CD8-positive, alpha-beta memory T cell (primary cell): ENCODE measurements at regions of chr2 and their contacts with region 1.

Region 1: DNA sequence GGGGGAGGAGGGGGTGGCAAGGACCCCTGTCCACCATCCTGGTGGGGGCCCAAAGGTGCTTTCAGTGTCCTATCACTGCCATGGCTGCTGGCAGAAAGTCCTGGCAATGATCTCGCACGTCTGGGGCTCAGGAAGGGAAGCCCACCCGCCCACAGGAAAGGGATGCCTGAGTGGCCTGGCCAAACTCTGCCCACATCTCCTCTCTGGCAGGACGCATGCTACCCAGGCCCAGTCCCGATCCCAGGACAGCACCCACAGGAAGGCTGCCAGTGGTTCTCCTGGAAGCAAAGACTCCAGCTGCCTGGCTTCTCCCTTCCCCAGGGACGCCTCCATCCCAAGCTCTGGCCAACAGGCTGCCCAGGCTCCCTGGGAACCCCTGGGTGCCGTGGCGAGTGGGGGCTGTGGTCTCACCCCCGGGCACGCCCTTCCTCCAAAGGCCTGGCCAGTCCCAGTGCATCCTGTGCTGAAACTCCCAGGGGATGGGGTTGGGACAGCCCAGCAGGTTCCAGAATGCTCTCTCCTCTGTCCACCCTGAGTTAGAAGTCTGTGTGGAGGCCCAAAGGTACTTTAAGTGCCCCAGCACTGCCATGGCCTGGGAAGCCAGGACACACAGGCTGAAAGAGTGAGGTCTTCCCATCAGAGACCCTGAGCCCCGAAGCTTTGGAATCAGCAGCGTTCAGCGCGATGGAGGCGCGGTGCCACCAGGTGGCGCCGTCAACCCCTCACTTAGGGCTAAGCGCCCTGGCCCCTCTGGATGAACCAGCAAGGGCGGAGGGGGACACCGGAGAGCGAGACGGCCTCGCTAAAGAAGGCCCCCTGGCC is 29.8 kb upstream of the TAF1B start:
- DNase-seq: peak; percentile 51 to 71 (median 57)
- H3K4me3 ChIP-seq: no peak overlapping the region
- H3K4me3 Mint-ChIP-seq: no peak overlapping the region
- H3K27ac ChIP-seq: no peak overlapping the region
- H3K27ac Mint-ChIP-seq: peak overlapping the region in 3 of 8 donors; percentile 78 to 86 (median 81)
- H3K4me1 ChIP-seq: peaks cover 7% of the 10 kb centered on the region
- H3K4me1 Mint-ChIP-seq: peaks cover 4 to 10% (median 10%) of the 10 kb centered on the region in 3 donors
- H3K27me3 ChIP-seq: no peaks in the 10 kb centered on the region
- H3K27me3 Mint-ChIP-seq: peaks cover 4 to 9% of the 10 kb centered on the region in 2 donors

Region 2: DNA sequence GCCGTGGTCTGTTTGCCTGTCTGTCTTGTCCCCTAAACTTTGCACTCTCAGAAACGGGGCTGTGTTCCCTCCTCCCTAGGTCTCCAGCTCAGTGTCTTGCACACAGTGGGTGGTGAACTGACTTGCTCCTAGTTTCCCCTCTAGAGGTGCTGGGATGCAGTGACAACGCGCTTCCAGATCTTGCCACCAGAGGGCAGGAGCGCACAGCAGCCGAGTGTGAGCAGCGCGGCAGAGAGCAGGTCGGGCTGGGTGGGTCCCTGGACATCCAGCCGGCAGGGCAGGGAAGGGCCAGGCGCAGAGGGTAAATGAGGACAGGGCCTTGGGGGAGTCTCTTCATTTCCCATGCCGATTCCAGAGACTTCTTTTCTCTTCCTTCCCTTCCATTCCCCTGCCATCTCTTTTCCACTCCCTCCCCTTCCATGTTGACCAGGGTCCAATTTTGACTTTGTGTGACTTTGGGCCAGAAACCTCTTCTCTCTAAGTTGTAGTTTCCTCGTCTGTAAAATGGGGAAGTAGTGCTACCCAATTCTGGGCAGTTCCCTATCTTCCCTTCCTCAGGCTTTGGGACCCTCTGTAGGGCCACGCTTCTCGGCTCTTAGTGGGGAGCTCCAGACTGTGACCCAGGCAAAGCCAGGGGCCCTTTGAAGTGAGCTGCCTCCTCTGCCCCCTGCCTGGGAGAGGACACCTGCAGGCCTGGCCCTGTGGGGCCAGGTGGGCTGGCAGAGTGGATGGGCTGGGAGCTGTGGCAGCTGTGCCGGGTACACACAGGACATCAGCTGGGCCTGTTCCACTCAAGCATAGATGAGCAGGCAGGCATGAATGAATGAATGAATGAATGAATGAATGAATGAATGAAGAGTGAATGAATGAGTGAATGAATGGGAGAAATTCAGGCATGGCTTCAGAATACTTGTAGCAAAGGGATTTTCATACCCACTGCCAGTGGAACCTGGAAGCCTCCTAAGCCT is 13.6 kb before region 1 on chr2:
- CTCF ChIA-PET with region 1: interaction called, 30 read pairs
- POLR2A ChIA-PET with region 1: no interaction called
- DNase-seq: peak; percentile 66 to 86 (median 80)
- H3K4me3 ChIP-seq: peak overlapping the region; percentile 28
- H3K4me3 Mint-ChIP-seq: peak overlapping the region; percentile 73 to 87 (median 82)
- H3K27ac ChIP-seq: no peak overlapping the region
- H3K27ac Mint-ChIP-seq: peak overlapping the region; percentile 73 to 98 (median 94)
- H3K4me1 ChIP-seq: peaks cover 20% of the 10 kb centered on the region
- H3K4me1 Mint-ChIP-seq: peaks cover 30 to 35% (median 32%) of the 10 kb centered on the region in 3 donors
- H3K27me3 ChIP-seq: no peaks in the 10 kb centered on the region
- H3K27me3 Mint-ChIP-seq: peaks cover 0 to 1% of the 10 kb centered on the region in 2 donors

Region 3: GRCh38 chr2:9843229-9844035 is 29.9 kb after region 1 on chr2 and contains the start of gene TAF1B:
- CTCF ChIA-PET with region 1: interaction called, 16 read pairs
- POLR2A ChIA-PET with region 1: interaction called, 4 read pairs
- DNase-seq: peak; percentile 78 to 89 (median 85)
- H3K4me3 ChIP-seq: peak within 1 kb of the TSS; percentile 89
- H3K4me3 Mint-ChIP-seq: peak within 1 kb of the TSS; percentile 93 to 98 (median 95)
- H3K27ac ChIP-seq: peak within 1 kb of the TSS; percentile 38
- H3K27ac Mint-ChIP-seq: peak within 1 kb of the TSS; percentile 64 to 99 (median 89)
- H3K4me1 ChIP-seq: peaks cover 11% of the 10 kb centered on the region
- H3K4me1 Mint-ChIP-seq: peaks cover 45 to 54% (median 51%) of the 10 kb centered on the region in 3 donors
- H3K27me3 ChIP-seq: no peaks in the 10 kb centered on the region
- H3K27me3 Mint-ChIP-seq: peaks cover 0 to 4% of the 10 kb centered on the region in 2 donors
- total RNA-seq, gene TAF1B: 20.6 to 24.3 TPM

Region 4: DNA sequence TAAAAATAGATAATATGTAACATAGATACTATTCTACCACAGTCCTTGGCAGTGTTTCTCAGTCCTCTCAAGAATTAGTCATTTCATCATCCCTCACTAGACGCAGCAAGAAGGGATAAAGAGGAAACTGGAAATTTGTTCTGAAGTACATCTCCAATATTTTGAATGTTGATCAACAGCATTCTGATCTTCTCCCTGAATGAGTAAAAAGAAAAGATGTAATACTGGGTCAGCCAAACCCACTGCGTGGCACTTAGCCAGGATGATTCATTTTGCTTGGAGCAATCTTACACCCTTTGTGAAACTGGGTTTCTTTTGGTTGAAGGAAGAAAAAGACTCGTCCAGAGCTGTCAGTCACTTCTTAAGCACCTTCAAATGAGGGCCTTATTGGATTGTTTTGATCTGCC is 83.8 kb after region 1 on chr2:
- CTCF ChIA-PET with region 1: no interaction called
- POLR2A ChIA-PET with region 1: no interaction called
- DNase-seq: no peak
- H3K4me3 ChIP-seq: no peak overlapping the region
- H3K4me3 Mint-ChIP-seq: no peak overlapping the region
- H3K27ac ChIP-seq: no peak overlapping the region
- H3K27ac Mint-ChIP-seq: peak overlapping the region in 2 of 8 donors; percentile 26 to 29
- H3K4me1 ChIP-seq: no peaks in the 10 kb centered on the region
- H3K4me1 Mint-ChIP-seq: peaks cover 18 to 22% (median 21%) of the 10 kb centered on the region in 3 donors
- H3K27me3 ChIP-seq: no peaks in the 10 kb centered on the region
- H3K27me3 Mint-ChIP-seq: no peaks in the 10 kb centered on the region

Region 5: DNA sequence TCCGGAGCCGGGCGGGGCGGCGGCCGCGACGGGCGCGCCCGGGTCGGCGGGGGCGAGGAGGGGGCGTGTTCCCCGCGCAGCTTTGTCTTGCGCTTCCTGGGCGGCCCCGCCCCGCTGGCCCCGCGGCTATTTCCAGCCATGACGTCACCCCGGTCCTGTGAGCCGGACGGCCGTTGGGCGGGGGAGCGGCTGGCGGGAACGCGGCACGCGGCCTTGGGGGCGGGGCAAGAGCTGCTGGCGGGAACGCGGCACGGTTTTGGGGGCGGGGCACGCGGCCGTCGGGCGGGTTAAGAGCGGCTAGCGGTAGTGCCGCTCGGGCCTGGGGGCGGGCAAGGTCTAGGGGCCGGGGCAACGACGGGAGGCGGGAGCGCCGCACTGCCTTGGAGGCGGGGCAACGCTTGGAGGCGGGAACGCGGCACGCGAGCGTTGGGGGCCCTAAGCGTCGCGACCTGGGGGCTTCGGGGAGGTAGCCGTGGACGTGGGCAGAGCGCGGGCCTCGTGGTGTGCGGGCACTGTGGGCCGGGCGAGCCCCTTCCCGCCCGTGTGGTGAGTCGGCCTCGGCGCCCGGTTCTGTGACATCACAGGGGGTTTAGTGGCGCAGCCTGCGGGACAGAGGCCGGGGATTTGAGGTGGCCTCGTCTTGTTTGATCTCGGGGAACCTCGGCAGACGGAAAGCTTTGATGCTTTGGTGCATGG is 230.5 kb after region 1 on chr2:
- CTCF ChIA-PET with region 1: interaction called, 58 read pairs
- POLR2A ChIA-PET with region 1: interaction called, 7 read pairs
- DNase-seq: peak; percentile 90 to 96 (median 94)
- H3K4me3 ChIP-seq: peak overlapping the region; percentile 50
- H3K4me3 Mint-ChIP-seq: peak overlapping the region; percentile 78 to 85 (median 83)
- H3K27ac ChIP-seq: peak overlapping the region; percentile 69
- H3K27ac Mint-ChIP-seq: peak overlapping the region; percentile 88 to 98 (median 96)
- H3K4me1 ChIP-seq: peaks cover 17% of the 10 kb centered on the region
- H3K4me1 Mint-ChIP-seq: peaks cover 28 to 53% (median 31%) of the 10 kb centered on the region in 3 donors
- H3K27me3 ChIP-seq: no peaks in the 10 kb centered on the region
- H3K27me3 Mint-ChIP-seq: peaks cover 0 to 6% of the 10 kb centered on the region in 2 donors